Activated CD4-positive, alpha-beta T cell treated with anti-CD3 and anti-CD28 coated beads, Interleukin-2, amount 10 ng/mL, durations not matched to agents 7 days and 5 days (primary cell): ENCODE measurements at regions of chr16 and their contacts with region 1.

Region 1: DNA sequence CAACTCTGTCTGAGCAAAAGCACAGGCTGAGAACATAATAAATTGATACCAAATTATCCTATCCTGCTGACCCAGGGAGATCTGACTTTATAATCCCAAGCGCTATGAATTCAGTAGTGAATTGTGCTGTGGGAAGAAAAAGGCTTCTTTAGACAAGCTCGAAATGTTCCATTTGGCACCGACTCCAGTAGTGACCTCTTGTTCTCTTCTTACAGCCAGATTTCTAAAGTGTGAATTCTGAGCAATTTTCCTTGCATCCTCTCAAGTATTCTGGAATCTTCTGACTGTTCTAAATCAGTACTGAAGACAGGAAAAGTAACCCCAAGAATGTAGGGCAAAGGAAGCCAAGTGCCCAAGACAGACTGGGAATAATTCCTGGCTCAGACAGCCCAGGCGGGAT is 58.2 kb downstream of the CDYL2 start:
- DNase-seq: no peak
- H3K4me3 Mint-ChIP-seq: no peak overlapping the region
- H3K27ac Mint-ChIP-seq: no peak overlapping the region
- H3K4me1 Mint-ChIP-seq: peaks cover 46% of the 10 kb centered on the region
- H3K27me3 Mint-ChIP-seq: no peaks in the 10 kb centered on the region

Region 2: DNA sequence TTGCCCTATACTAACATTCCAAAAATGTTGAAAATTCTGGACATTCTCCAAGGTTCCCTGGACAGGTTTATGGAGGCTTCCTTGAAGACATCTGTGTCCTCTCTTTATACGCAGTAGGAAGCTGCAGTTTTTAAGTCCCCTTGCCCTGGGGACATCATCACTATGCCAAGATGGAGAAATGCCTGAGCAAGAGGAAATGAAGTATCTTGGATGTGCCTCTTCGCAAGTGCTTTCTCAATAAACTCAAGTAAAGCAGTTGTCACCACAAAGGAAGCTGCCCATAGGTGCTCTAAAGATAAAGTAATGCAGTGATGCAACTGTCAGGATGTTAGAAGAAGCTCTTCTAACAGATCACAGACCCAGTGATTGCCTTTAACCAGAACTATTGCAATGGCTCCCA is 12.8 kb before region 1 on chr16:
- CTCF ChIA-PET with region 1: interaction called, 12 read pairs
- POLR2A ChIA-PET with region 1: interaction called, 3 read pairs
- DNase-seq: no peak
- H3K4me3 Mint-ChIP-seq: no peak overlapping the region
- H3K27ac Mint-ChIP-seq: no peak overlapping the region
- H3K4me1 Mint-ChIP-seq: peaks cover 6% of the 10 kb centered on the region
- H3K27me3 Mint-ChIP-seq: no peaks in the 10 kb centered on the region

Region 3: GRCh38 chr16:80759419-80760162 is 13.4 kb after region 1 on chr16:
- CTCF ChIA-PET with region 1: no interaction called
- POLR2A ChIA-PET with region 1: no interaction called
- DNase-seq: no peak
- H3K4me3 Mint-ChIP-seq: no peak overlapping the region
- H3K27ac Mint-ChIP-seq: peak overlapping the region; percentile 5
- H3K4me1 Mint-ChIP-seq: peaks cover 13% of the 10 kb centered on the region
- H3K27me3 Mint-ChIP-seq: peaks cover 2% of the 10 kb centered on the region